Aorta (tissue), 5 donors: ENCODE measurements at regions of chr5 and their contacts with region 1.

Region 1: GRCh38 chr5:10856683-10857337 is 95.8 kb upstream of the DAP start:
- DNase-seq: peak in 1 of 2 donors; percentile 64
- ATAC-seq: no peak
- H3K4me3 ChIP-seq: no peak overlapping the region
- H3K27ac ChIP-seq: no peak overlapping the region
- H3K4me1 ChIP-seq: no peaks in the 10 kb centered on the region
- H3K27me3 ChIP-seq: no peaks in the 10 kb centered on the region

Region 2: DNA sequence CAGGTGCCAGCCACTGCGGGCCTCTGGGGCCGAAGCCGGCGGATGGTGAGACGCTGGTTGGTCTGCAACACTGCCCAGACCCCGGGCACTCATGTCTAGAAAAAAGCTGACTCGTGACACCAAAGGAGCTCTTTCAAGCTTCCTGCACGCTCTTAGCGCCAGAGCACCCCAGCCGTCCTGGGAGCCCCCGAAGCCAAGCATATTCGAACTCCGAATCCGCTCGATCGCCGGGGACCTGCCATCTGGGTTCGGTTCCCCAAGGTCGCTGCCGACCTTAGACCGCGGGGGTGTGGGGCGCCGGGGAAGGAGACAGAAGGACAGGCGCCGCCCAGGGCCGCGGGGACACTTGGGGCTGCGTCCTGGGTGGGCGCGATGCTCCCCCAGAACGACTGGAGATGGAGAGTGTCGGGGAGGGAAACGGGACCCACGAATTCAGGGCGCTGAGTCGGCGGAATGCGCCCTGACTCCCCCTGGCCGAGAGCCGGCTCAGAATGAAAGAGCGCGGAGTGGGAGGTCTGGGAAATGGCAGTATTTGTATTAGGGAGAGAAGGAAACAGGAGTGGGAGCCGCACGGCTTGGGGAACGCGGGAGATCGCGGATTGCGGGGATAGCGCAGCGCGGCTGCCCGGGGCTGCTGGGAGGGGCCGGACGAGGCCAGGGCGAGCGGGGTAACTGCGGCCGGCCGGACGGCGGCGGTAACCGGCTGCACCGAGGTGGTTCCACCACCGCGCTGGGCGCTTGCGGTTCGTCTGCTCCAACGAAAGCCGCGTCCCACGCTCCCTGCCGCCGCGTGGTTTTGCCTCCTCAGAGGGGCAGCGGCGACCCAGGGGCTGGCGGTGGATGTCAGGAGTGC is 523.4 kb before region 1 on chr5:
- intact Hi-C with region 1: no loop called
- DNase-seq: peak; percentile 61 to 85
- ATAC-seq: peak; percentile 67
- H3K4me3 ChIP-seq: peak overlapping the region; percentile 14 to 54
- H3K27ac ChIP-seq: no peak overlapping the region
- H3K4me1 ChIP-seq: peaks cover 6 to 11% of the 10 kb centered on the region in 2 donors
- H3K27me3 ChIP-seq: no peaks in the 10 kb centered on the region

Region 3: DNA sequence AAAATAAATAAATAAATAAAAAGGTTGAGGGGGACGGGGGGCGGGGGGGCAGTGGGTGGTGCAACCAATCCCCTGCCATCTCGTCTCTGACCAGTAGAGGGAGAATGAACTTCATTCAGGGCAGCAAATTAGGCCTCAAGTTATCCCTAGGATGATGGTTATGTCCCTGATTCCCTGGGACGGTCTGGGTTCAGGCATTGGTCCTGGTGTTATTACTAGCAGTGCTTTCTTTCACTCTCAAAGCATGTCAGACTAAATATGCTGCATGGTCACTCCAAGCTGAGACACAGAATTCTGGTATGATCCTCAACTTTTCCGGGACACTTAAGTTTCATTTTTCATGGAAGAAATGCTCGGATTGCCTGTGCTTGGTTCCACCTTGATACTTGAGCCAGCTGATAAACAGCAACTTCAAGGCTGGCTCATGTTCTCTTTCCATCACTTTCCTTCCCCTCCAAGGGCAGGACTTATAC is 155.2 kb before region 1 on chr5:
- intact Hi-C with region 1: loop called in 1 of 2 experiments (anchors 10 kb)
- DNase-seq: no peak
- ATAC-seq: no peak
- H3K4me3 ChIP-seq: no peak overlapping the region
- H3K27ac ChIP-seq: peak overlapping the region; percentile 2 to 11
- H3K4me1 ChIP-seq: no peaks in the 10 kb centered on the region
- H3K27me3 ChIP-seq: no peaks in the 10 kb centered on the region

Region 4: GRCh38 chr5:10797261-10797660 is 59.5 kb before region 1 on chr5:
- intact Hi-C with region 1: loop called in 1 of 2 experiments (anchors 5 kb)
- DNase-seq: no peak
- ATAC-seq: no peak
- H3K4me3 ChIP-seq: no peak overlapping the region
- H3K27ac ChIP-seq: no peak overlapping the region
- H3K4me1 ChIP-seq: no peaks in the 10 kb centered on the region
- H3K27me3 ChIP-seq: no peaks in the 10 kb centered on the region